ENCODE measurements at regions of chr2 and their contacts with region 1.

Region 1: DNA sequence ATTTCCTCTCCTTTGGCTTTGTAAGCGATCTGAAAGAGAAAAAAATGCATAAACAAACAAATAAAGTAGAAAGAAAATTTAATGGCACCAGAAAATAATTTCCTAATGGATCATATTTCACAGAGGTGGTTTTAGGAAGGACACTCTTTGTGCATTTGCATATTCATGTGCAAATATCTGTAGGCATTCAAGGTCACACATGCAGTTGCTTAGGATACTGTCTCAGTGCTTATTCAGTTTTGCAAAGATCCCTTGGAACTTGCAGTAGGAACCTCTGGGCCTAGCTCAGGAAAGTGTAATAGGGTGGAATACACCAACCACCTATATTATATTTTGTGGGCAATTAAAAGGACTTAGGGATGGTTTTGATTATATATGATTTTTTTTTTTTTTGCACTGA is 54.3 kb downstream of the NEB start:
- DNase-seq: no peak

Region 2: DNA sequence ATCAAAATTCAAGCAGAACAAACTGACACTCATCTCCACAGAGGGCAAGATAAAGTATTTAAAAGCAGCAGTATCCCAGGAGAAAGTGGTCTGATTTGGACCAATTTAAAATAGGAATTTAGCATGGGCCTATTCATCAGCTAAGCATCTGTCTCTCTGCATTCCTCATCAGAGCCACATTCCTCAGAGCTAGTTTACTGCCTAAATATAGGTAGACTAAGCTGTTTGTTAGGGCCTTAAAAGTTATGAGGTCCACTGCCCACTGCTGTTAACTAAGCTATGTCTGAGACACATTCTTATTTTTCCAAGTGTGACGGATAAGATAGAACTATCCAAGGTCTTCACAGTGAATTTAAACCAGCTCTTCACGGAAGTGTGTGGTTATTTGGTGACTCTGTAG is 36.7 kb after region 1 on chr2:
- intact Hi-C with region 1: no loop called
- DNase-seq: no peak

Region 3: DNA sequence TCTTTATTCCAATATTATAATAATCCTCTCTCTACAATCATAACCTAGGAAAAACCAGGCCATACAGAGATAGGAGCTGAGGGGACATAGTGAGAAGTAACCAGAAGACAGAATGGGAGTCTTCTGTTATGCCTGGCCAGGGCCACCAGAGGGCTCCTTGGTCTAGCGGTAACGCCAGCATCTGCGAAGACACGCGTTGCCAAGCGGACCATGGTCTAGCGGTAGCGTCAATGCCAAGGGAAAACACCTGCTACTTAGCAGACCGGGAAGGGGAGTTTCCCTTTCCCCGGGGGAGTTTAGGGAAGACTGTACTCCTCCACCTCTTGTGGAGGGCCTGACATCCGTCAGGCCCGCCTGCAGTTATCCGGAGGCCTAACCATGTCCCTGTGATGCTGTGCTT is 1075.0 kb after region 1 on chr2:
- intact Hi-C with region 1: loop called in 1 of 2 experiments (anchors 5 kb)
- DNase-seq: no peak

Measured in posterior vena cava (tissue), 2 donors.